Motor neuron (in vitro differentiated cells): ENCODE measurements at regions of chr11 and their contacts with region 1.

Region 1: DNA sequence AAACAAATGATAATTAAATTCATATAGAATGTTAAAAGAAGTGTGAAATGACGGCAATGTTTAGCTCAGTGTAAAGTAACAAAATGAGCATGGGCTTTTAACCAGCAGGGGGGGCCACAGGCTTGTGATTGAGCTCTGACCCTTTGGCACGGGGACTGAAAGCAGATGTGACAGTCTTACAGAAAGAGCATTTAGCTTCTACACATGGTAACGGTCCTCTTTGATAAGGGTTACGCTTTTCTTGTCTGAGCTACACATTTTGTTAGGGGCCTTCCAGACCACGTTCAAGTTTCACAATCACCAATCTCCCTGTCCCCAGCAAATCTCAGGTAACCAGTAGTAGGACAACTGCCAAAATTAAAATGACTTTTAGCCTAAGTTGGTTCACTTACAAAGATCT is 262.5 kb downstream of the DCDC1 start:
- ATAC-seq: peak; percentile 86 to 95 (median 90)
- H3K4me3 ChIP-seq: no peak overlapping the region
- H3K27ac ChIP-seq: no peak overlapping the region
- H3K4me1 ChIP-seq: peaks cover 10 to 26% of the 10 kb centered on the region in 2 donors

Region 2: GRCh38 chr11:31218847-31219246 is 111.8 kb after region 1 on chr11:
- in situ Hi-C with region 1: loop called in 2 of 9 experiments (anchors 10 to 25 kb)
- ATAC-seq: no peak
- H3K4me3 ChIP-seq: no peak overlapping the region
- H3K27ac ChIP-seq: no peak overlapping the region
- H3K4me1 ChIP-seq: no peaks in the 10 kb centered on the region

Region 3: DNA sequence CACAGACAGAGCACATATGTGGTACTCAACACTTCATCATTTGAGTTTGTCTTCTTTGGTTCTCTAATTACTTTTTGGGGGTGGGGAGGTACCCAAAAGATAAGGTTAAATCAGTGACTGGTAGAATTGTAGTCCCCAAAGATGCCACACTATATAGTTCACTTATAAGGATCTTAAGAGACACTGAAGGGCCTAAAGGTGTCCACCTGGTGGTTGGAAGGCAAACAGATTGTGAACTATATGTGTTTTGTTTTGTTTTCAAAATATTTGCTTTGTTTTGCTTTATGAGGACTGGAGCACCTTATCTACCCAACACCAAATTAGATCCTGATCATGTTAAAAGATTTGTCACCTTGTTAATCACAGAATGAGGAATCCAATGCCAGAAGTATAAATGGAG is 126.4 kb after region 1 on chr11:
- in situ Hi-C with region 1: loop called in 1 of 9 experiments (anchors 10 kb)
- ATAC-seq: peak in 3 of 8 experiments; percentile 27 to 67 (median 36)
- H3K4me3 ChIP-seq: no peak overlapping the region
- H3K27ac ChIP-seq: no peak overlapping the region
- H3K4me1 ChIP-seq: peaks cover 6 to 16% of the 10 kb centered on the region in 2 donors

Region 4: DNA sequence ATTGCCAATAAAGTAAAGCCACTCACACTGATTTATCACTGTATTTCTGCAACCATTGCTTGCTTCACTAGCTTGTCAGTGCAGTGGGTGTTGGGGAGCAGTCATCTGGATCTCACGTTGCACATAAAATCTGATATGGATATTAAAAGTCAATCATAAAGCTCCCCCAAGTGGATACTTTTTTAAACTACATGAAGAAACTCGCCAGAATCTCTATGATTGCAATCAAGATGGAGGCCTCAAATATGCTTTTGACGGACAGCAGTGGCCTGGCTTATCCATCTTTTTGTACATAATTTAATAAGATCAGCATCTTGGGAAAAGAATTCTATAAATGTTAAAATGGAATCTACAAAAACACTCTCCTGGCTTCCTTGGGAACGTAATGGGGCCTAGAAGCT is 1190.5 kb after region 1 on chr11:
- in situ Hi-C with region 1: loop called in 1 of 9 experiments (anchors 25 kb)
- ATAC-seq: peak; percentile 40 to 94 (median 53)
- H3K4me3 ChIP-seq: no peak overlapping the region
- H3K27ac ChIP-seq: no peak overlapping the region
- H3K4me1 ChIP-seq: peaks cover 0 to 3% of the 10 kb centered on the region in 2 donors